CD8-positive, alpha-beta T cell (primary cell): ENCODE measurements at regions of chr3 and their contacts with region 1.

Region 1: DNA sequence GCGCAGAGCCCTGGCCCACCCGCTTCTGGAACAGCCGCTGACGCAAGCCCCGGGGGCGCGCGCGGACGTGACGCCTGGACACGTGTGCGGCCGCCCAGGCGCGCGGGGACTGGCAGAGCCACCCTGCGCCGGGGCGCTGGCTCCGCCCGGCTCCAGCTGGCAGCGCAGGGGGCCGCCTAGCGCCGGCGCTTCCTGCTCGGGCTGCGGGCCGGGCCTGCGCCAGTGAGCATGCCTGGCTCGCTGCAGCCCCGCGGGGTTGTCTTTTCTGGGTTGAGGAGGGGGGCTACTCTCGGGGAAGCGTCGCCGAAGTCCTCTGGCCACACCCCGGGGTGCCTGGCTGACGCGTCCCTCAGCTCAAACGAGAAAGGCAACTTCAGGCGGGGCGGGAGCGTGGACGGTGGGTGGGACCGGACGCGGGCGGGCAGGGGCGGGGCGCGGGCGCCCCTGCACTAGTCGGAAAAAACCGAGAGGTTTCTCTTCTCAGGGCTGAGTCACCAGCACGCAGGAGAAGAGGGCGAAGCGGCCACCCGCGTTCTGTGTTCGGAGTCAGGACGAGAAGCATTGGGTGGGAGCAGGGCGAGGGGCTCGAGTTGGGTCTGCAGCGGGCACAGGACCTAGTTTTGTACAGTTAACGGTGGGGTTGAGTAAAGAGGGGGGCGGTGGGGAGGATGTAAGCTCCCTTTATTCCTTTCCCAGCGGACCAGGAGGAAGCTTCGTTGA is at the start of gene SIAH2:
- DNase-seq: peak; percentile 85 to 98 (median 92)
- ATAC-seq: peak; percentile 81
- H3K4me3 ChIP-seq: peak within 1 kb of the TSS; percentile 81 to 87
- H3K4me3 Mint-ChIP-seq: peak within 1 kb of the TSS; percentile 94
- H3K27ac ChIP-seq: peak within 1 kb of the TSS; percentile 97 to 98
- H3K27ac Mint-ChIP-seq: peak within 1 kb of the TSS; percentile 99
- H3K4me1 ChIP-seq: peaks cover 39% of the 10 kb centered on the region
- H3K4me1 Mint-ChIP-seq: peaks cover 43% of the 10 kb centered on the region
- H3K27me3 ChIP-seq: no peaks in the 10 kb centered on the region
- H3K27me3 Mint-ChIP-seq: no peaks in the 10 kb centered on the region
- CTCF ChIP-seq: no peak
- total RNA-seq, gene SIAH2: 57.0 to 65.4 TPM

Region 2: DNA sequence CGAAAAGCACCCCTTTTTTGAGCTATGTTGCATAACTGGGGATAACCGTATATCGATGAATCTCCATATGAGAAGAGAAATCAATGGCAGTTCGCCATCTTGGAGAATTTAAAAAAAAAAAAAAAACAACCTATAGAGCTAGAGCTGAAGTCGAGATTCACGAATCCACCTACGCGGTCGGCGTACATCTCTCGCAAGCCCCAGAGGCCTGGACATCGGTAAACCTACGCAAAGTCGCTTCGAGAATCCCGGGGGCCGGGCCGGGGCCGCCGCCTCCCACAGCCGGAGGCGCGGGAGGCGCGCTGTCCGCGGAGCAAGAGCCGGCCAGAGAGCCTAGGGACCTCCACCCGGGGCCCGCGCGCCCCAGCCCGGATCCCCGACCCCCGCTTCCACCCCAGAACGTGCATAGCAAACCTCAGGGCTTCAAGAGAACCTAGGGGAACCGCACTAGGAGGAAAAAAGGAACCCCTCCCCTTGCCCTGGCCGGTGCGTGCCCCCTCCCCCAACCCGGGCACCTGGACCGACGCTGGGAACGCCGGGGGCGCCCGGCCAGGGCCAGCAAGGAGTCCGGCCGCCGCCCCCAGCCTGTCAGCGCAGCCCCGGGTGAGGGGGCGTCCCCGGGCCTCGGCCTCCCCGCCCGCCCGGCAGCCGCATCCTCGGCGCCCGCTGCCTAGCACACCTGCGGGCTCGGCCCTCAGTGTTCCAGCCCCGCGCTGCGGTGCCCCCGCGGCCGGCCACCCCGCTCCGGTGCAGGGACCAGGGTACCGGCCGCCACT is 793.2 kb before region 1 on chr3:
- CTCF ChIA-PET with region 1: no interaction called
- POLR2A ChIA-PET with region 1: no interaction called
- intact Hi-C with region 1: loop called (anchors 2 to 10 kb)
- DNase-seq: peak; percentile 59 to 90 (median 82)
- ATAC-seq: peak; percentile 56
- H3K4me3 ChIP-seq: peak overlapping the region; percentile 63 to 68
- H3K4me3 Mint-ChIP-seq: peak overlapping the region; percentile 95
- H3K27ac ChIP-seq: peak overlapping the region in 1 of 2 experiments; percentile 16
- H3K27ac Mint-ChIP-seq: peak overlapping the region; percentile 88
- H3K4me1 ChIP-seq: peaks cover 10% of the 10 kb centered on the region
- H3K4me1 Mint-ChIP-seq: peaks cover 23% of the 10 kb centered on the region
- H3K27me3 ChIP-seq: peaks cover 0 to 3% of the 10 kb centered on the region in 2 experiments
- H3K27me3 Mint-ChIP-seq: peaks cover 3% of the 10 kb centered on the region
- CTCF ChIP-seq: no peak

Region 3: GRCh38 chr3:150603153-150603979 is 159.9 kb before region 1 on chr3 and contains the start of gene SELENOT:
- CTCF ChIA-PET with region 1: no interaction called
- POLR2A ChIA-PET with region 1: interaction called, 29 read pairs
- intact Hi-C with region 1: loop called (anchors 1 kb)
- DNase-seq: peak; percentile 88 to 98 (median 94)
- ATAC-seq: peak; percentile 81
- H3K4me3 ChIP-seq: peak within 1 kb of the TSS; percentile 79 to 86
- H3K4me3 Mint-ChIP-seq: peak within 1 kb of the TSS; percentile 99
- H3K27ac ChIP-seq: peak within 1 kb of the TSS; percentile 88 to 95
- H3K27ac Mint-ChIP-seq: peak within 1 kb of the TSS; percentile 100
- H3K4me1 ChIP-seq: peaks cover 43% of the 10 kb centered on the region
- H3K4me1 Mint-ChIP-seq: peaks cover 71% of the 10 kb centered on the region
- H3K27me3 ChIP-seq: no peaks in the 10 kb centered on the region
- H3K27me3 Mint-ChIP-seq: no peaks in the 10 kb centered on the region
- CTCF ChIP-seq: no peak
- total RNA-seq, gene SELENOT: 130 to 139 TPM

Region 4: GRCh38 chr3:150703299-150704134 is 59.8 kb before region 1 on chr3 and contains the start of gene ERICH6:
- CTCF ChIA-PET with region 1: no interaction called
- POLR2A ChIA-PET with region 1: interaction called, 45 read pairs
- intact Hi-C with region 1: loop called (anchors 1 to 5 kb)
- DNase-seq: peak; percentile 61 to 89 (median 74)
- ATAC-seq: peak; percentile 77
- H3K4me3 ChIP-seq: peak within 1 kb of the TSS; percentile 69 to 89
- H3K4me3 Mint-ChIP-seq: peak within 1 kb of the TSS; percentile 96
- H3K27ac ChIP-seq: peak within 1 kb of the TSS; percentile 83 to 98
- H3K27ac Mint-ChIP-seq: peak within 1 kb of the TSS; percentile 94
- H3K4me1 ChIP-seq: peaks cover 9% of the 10 kb centered on the region
- H3K4me1 Mint-ChIP-seq: peaks cover 23% of the 10 kb centered on the region
- H3K27me3 ChIP-seq: no peaks in the 10 kb centered on the region
- H3K27me3 Mint-ChIP-seq: no peaks in the 10 kb centered on the region
- CTCF ChIP-seq: no peak
- total RNA-seq, gene ERICH6: 0.28 to 0.52 TPM

Region 5: GRCh38 chr3:150737874-150738713 is 25.2 kb before region 1 on chr3:
- CTCF ChIA-PET with region 1: no interaction called
- POLR2A ChIA-PET with region 1: interaction called, 4 read pairs
- intact Hi-C with region 1: loop called in 1 of 2 experiments (anchors 2 kb)
- DNase-seq: no peak
- ATAC-seq: no peak
- H3K4me3 ChIP-seq: no peak overlapping the region
- H3K4me3 Mint-ChIP-seq: no peak overlapping the region
- H3K27ac ChIP-seq: no peak overlapping the region
- H3K27ac Mint-ChIP-seq: no peak overlapping the region
- H3K4me1 ChIP-seq: peaks cover 9% of the 10 kb centered on the region
- H3K4me1 Mint-ChIP-seq: peaks cover 42% of the 10 kb centered on the region
- H3K27me3 ChIP-seq: no peaks in the 10 kb centered on the region
- H3K27me3 Mint-ChIP-seq: no peaks in the 10 kb centered on the region
- CTCF ChIP-seq: no peak

Region 6: DNA sequence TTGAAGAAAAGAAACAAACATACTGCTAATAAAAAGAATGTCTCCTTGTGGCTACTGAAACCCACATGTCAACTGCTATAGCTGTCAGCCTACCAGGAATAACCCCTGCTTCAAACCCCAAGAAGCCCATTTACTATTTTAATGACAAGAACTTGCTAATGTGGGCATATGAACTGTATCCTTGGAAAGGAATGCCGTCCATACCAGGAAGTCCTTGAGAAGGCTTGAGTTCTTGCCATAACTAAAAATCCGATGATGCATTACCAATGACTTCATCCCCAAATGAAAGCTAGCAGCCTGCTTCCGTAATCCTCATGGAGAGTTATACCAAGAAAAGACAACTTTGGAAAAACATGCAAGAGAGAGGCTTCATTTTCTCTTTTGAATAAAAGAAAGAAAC is 107.1 kb after region 1 on chr3:
- CTCF ChIA-PET with region 1: interaction called, 9 read pairs
- POLR2A ChIA-PET with region 1: no interaction called
- intact Hi-C with region 1: loop called in 1 of 2 experiments (anchors 1 kb)
- DNase-seq: no peak
- ATAC-seq: no peak
- H3K4me3 ChIP-seq: no peak overlapping the region
- H3K4me3 Mint-ChIP-seq: no peak overlapping the region
- H3K27ac ChIP-seq: no peak overlapping the region
- H3K27ac Mint-ChIP-seq: no peak overlapping the region
- H3K4me1 ChIP-seq: no peaks in the 10 kb centered on the region
- H3K4me1 Mint-ChIP-seq: peaks cover under 1% of the 10 kb centered on the region
- H3K27me3 ChIP-seq: no peaks in the 10 kb centered on the region
- H3K27me3 Mint-ChIP-seq: peaks cover 14% of the 10 kb centered on the region
- CTCF ChIP-seq: no peak

Region 7: DNA sequence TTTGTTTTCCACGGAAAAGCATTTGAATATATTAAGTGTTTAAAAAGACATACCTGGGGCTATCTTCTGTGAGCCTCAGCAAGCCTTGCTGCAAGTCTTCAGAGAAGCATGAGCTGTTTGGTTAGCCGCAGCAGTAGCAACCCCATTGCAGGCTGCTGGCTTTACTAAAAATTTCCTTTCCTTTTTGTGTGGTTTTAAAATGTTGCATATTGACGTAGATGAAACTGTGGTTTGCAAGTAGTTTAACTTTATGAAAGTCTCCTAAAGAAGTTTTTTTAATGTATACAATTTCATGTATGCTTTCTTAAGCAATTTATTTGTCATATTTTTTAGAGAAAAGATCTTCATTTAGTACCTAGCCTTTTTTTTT is 439.8 kb after region 1 on chr3 and contains the start of gene GPR171:
- CTCF ChIA-PET with region 1: no interaction called
- POLR2A ChIA-PET with region 1: interaction called, 11 read pairs
- intact Hi-C with region 1: loop called (anchors 2 to 5 kb)
- DNase-seq: peak; percentile 46 to 91 (median 68)
- ATAC-seq: peak; percentile 84
- H3K4me3 ChIP-seq: peak within 1 kb of the TSS; percentile 50 to 59
- H3K4me3 Mint-ChIP-seq: peak within 1 kb of the TSS; percentile 76
- H3K27ac ChIP-seq: peak within 1 kb of the TSS; percentile 36 to 72
- H3K27ac Mint-ChIP-seq: peak within 1 kb of the TSS; percentile 91
- H3K4me1 ChIP-seq: peaks cover 67% of the 10 kb centered on the region
- H3K4me1 Mint-ChIP-seq: peaks cover 81% of the 10 kb centered on the region
- H3K27me3 ChIP-seq: no peaks in the 10 kb centered on the region
- H3K27me3 Mint-ChIP-seq: no peaks in the 10 kb centered on the region
- CTCF ChIP-seq: no peak
- total RNA-seq, gene GPR171: 11.5 to 13.4 TPM

Region 8: DNA sequence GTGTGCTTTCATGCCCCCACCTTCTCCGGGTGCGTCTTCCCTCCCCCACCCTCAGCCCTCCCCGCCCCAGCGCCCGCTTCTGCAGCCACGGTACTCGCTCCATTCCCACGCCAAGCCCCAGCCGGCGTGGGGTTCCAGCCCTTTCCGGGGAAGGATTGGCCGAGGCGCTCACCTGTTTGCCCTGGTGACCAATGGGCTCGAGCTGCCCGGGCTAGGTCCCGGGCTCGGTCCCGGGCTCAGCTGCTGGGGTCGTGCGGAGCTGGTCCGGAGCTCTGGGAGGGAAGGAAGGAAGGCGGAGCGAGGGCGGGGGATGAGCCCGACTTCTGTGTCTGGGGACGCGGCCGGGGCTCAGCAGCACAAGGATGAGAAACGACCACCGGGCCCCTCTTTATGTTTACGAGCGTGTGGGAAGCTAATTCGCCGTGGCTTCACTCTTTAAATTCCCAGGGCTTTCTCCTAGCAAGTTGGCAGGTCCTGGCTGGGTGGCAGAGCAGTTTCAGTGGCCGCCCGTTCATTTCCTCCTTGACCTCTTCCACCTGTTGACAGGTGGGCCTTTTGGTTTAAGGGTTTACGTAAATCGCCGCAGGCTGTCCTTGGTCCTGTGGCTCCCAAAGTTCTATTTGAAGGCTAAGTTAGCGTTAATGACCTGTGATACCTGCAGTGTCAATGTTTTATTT is 697.6 kb after region 1 on chr3 and contains the start of gene IGSF10:
- CTCF ChIA-PET with region 1: no interaction called
- POLR2A ChIA-PET with region 1: no interaction called
- intact Hi-C with region 1: no loop called
- DNase-seq: no peak
- ATAC-seq: no peak
- H3K4me3 ChIP-seq: no peak within 1 kb of the TSS
- H3K4me3 Mint-ChIP-seq: no peak within 1 kb of the TSS
- H3K27ac ChIP-seq: no peak within 1 kb of the TSS
- H3K27ac Mint-ChIP-seq: no peak within 1 kb of the TSS
- H3K4me1 ChIP-seq: no peaks in the 10 kb centered on the region
- H3K4me1 Mint-ChIP-seq: peaks cover 3% of the 10 kb centered on the region
- H3K27me3 ChIP-seq: peaks cover 0 to 9% of the 10 kb centered on the region in 2 experiments
- H3K27me3 Mint-ChIP-seq: peaks cover 17% of the 10 kb centered on the region
- CTCF ChIP-seq: no peak
- total RNA-seq, gene IGSF10: not detected